ENCODE measurements at regions of chr16 and their contacts with region 1.

Region 1: DNA sequence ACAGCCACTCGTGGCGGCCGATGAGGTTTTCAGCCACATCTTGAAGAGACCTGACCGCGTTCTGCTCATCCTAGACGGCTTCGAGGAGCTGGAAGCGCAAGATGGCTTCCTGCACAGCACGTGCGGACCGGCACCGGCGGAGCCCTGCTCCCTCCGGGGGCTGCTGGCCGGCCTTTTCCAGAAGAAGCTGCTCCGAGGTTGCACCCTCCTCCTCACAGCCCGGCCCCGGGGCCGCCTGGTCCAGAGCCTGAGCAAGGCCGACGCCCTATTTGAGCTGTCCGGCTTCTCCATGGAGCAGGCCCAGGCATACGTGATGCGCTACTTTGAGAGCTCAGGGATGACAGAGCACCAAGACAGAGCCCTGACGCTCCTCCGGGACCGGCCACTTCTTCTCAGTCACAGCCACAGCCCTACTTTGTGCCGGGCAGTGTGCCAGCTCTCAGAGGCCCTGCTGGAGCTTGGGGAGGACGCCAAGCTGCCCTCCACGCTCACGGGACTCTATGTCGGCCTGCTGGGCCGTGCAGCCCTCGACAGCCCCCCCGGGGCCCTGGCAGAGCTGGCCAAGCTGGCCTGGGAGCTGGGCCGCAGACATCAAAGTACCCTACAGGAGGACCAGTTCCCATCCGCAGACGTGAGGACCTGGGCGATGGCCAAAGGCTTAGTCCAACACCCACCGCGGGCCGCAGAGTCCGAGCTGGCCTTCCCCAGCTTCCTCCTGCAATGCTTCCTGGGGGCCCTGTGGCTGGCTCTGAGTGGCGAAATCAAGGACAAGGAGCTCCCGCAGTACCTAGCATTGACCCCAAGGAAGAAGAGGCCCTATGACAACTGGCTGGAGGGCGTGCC is 30.1 kb downstream of the CIITA start:
- DNase-seq: no peak
- H3K4me3 ChIP-seq: no peak overlapping the region
- H3K27ac ChIP-seq: no peak overlapping the region
- H3K4me1 ChIP-seq: no peaks in the 10 kb centered on the region
- H3K27me3 ChIP-seq: no peaks in the 10 kb centered on the region

Region 2: GRCh38 chr16:10895053-10895946 is 11.8 kb before region 1 on chr16:
- CTCF ChIA-PET with region 1: interaction called, 33 read pairs
- POLR2A ChIA-PET with region 1: no interaction called
- DNase-seq: peak in 2 of 3 donors; percentile 40 to 42
- H3K4me3 ChIP-seq: no peak overlapping the region
- H3K27ac ChIP-seq: no peak overlapping the region
- H3K4me1 ChIP-seq: peaks cover 7 to 42% (median 31%) of the 10 kb centered on the region in 4 experiments
- H3K27me3 ChIP-seq: no peaks in the 10 kb centered on the region

Region 3: DNA sequence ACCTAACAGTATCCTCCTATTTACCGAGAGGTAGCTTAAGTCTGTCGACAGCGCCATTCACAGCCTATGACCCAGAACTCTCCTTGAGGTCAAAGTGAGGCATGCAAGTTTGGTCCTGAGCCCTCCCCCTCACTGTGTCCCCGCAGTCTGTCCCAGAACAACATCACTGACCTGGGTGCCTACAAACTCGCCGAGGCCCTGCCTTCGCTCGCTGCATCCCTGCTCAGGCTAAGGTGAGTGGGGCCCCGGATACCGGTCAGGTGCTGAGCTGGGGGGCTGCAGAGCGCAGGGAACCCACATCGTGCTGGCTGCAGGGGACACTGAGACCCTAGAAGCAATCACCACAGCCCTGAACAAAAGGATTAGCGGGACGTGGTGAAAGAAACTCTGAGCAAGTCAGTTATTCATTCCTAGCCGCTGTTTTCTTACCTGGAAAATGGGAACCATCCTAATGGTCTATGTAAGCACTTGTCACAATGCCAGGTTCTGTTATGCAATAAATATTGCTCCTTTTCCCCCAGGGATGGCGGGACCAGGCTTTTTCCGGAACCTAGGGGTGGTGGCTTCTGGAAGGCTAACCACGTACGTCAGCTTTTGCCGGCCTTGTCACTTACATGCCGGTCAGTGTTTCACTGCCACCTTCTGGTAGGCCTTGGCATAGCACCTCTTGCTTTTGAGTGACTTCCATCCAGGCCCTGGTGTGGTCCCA is 11.3 kb after region 1 on chr16:
- CTCF ChIA-PET with region 1: interaction called, 10 read pairs
- POLR2A ChIA-PET with region 1: no interaction called
- DNase-seq: peak; percentile 91 to 95 (median 91)
- H3K4me3 ChIP-seq: no peak overlapping the region
- H3K27ac ChIP-seq: no peak overlapping the region
- H3K4me1 ChIP-seq: peaks cover 0 to 6% (median 0%) of the 10 kb centered on the region in 4 experiments
- H3K27me3 ChIP-seq: no peaks in the 10 kb centered on the region

Region 4: DNA sequence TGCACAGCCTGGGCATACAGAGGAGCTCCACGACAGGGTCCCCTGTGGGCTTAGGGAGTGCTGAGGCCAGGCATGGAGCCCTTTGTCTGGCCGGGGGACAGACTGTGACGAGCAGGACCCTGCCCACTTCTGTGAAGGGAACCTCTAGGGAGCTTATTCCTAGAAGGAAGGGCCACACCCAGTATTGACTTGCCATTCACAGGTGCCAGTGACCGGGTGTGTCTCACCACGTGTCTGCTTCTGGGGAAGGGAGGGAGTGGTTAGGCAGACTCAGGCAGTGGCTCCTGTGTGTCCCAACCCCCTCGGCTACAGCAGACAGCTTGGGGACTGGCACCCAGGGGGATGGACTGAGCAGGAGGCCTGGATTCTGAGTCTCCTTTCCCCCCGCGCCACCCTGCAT is 291.7 kb after region 1 on chr16:
- CTCF ChIA-PET with region 1: no interaction called
- POLR2A ChIA-PET with region 1: no interaction called
- DNase-seq: no peak
- H3K4me3 ChIP-seq: no peak overlapping the region
- H3K27ac ChIP-seq: no peak overlapping the region
- H3K4me1 ChIP-seq: peaks cover 2 to 79% (median 33%) of the 10 kb centered on the region in 4 experiments
- H3K27me3 ChIP-seq: no peaks in the 10 kb centered on the region